Stomach (tissue), 19 donors: ENCODE measurements at regions of chr1 and their contacts with region 1.

Region 1: DNA sequence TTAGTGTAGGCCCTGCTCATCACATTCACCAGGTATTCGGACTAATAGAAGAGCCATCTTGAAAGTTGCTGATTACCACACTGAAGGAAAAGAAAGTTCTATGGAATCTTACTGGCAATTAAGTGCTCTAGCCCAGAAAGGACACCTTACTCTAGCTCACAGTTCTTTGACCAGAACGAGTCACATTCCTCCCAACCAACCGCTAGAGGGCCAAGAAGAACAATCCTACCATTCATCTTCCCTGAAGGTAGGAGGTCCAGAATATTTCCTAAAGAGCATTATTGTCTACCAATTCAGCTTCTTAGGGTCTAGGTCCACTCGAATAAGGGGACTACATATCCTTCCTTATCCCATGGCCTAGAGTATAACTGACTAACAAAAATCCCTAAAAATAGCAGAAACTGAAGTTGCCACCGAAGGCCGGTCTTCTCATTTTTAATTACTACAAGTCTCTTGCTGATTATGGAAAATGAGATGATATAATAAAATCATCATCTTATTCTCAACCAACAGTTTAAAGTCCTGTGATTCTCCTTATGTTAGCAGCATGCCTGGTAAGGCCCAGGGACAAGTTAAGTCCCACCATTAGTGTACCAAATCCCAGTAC is 2.7 kb upstream of the FMO1 start:
- DNase-seq: peak in 1 of 2 donors; percentile 69
- H3K4me3 ChIP-seq: no peak overlapping the region
- H3K27ac ChIP-seq: no peak overlapping the region
- H3K4me1 ChIP-seq: no peaks in the 10 kb centered on the region
- H3K27me3 ChIP-seq: no peaks in the 10 kb centered on the region
- CTCF ChIP-seq: peak in 5 of 7 experiments; percentile 42 to 69 (median 64)
- EP300 ChIP-seq: no peak
- POLR2A ChIP-seq: no peak

Region 2: DNA sequence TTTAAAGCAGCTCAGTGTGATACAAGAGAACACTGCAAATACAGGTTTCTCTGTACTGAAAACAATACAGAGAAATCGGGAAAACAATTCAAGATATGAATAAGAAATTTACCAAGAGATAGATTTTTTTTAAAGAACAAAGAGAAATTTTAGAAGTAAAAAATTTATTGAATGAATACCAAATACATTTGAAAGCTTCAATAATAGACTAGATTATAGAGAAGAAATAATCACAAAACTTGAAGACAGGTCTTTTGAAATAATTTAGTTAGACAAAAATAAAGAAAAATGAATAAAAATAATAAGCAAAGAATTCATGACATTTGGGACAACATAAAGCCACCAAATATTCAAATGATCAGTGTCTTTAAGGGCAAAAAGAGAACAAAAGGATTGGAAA is 54.8 kb after region 1 on chr1:
- intact Hi-C with region 1: loop called (anchors 10 kb)
- DNase-seq: no peak
- H3K4me3 ChIP-seq: no peak overlapping the region
- H3K27ac ChIP-seq: no peak overlapping the region
- H3K4me1 ChIP-seq: no peaks in the 10 kb centered on the region
- H3K27me3 ChIP-seq: no peaks in the 10 kb centered on the region
- CTCF ChIP-seq: no peak
- EP300 ChIP-seq: no peak
- POLR2A ChIP-seq: no peak

Region 3: DNA sequence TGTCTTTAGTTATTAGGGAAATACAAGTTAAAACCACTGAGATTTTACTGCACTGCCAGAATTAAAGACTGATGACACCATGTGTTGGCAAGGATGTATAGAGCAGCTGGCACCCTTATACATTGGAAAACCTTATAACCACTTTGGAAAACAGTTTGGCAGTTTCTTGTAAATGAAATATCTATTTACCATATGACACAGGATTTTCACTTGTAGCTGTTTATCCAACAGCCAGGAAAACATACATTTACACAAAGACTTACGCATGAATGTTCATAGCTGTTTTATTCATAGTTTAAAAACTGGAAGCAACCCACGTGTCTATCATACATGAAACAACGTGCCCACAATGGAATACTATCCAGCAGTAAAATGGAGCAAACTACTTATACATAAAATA is 285.1 kb after region 1 on chr1:
- intact Hi-C with region 1: no loop called
- DNase-seq: no peak
- H3K4me3 ChIP-seq: no peak overlapping the region
- H3K27ac ChIP-seq: no peak overlapping the region
- H3K4me1 ChIP-seq: no peaks in the 10 kb centered on the region
- H3K27me3 ChIP-seq: no peaks in the 10 kb centered on the region
- CTCF ChIP-seq: no peak
- EP300 ChIP-seq: no peak
- POLR2A ChIP-seq: no peak